AG04449 (cell line): ENCODE measurements at regions of chr11 and their contacts with region 1.

Region 1: DNA sequence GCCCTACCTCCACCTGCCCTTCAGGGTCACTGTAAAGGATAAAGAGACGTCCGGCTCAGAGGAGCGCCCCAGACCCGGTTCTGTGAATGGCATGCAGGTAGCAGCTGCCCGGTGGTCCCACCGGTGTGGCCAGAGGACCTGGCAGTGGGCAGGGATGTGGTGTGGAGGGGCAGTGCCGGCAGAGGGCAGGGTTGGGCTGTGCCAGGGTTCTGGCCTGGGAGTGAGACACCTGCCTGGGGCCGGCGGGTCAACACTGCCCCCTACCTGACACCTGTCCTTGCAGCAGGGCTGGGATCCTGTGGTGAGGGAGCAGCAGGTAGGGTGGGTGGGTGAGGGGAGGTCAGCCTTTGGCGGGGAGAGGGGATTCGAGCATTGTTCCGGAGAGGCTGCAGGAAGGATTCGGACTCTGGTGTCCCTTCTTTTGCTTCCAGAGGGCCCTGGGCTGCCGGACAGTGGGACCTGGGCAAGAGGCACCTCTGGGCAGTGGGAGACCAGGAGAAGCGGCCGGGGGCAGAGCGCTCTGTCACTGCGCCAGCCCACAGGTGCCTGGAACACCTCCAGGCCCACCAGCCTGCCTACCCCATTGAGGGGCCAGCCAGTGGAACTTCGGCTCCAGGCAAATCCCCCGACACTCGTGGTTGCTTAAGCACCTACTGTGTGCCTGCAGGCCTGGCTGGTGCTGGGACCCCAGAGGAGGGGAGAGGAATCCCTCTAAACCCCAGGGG is 1.6 kb upstream of the PHLDA2 start:
- DNase-seq: no peak
- H3K4me3 ChIP-seq: peak overlapping the region; percentile 77
- CTCF ChIP-seq: peak; percentile 75

Region 2: GRCh38 chr11:2892215-2893020 is 38.4 kb before region 1 on chr11:
- CTCF ChIA-PET with region 1: interaction called, 13 read pairs
- POLR2A ChIA-PET with region 1: interaction called, 14 read pairs
- DNase-seq: no peak
- H3K4me3 ChIP-seq: peak overlapping the region; percentile 62
- CTCF ChIP-seq: peak; percentile 96

Region 3: DNA sequence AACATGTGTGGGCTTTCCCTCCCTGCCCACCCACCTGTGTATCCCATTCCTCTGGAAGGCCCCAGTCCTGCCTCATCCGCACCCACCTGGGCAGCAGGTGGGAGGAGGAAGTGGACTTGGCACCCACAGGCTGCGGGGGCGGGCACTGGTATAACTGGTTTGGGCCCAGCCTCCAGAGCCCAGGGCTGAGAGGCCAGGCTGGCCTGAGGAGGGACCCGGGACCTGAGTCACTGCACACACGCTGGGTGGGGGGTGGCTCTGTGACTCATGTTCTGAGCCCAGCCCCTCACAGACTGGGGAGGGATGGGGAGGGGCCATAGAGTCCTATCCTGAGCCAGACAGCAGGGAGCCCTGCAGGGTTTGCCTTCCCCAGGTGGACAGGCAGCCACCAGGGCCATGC is 18.4 kb before region 1 on chr11:
- CTCF ChIA-PET with region 1: interaction called, 11 read pairs
- POLR2A ChIA-PET with region 1: interaction called, 13 read pairs
- DNase-seq: peak; percentile 34
- H3K4me3 ChIP-seq: no peak overlapping the region
- CTCF ChIP-seq: no peak

Region 4: DNA sequence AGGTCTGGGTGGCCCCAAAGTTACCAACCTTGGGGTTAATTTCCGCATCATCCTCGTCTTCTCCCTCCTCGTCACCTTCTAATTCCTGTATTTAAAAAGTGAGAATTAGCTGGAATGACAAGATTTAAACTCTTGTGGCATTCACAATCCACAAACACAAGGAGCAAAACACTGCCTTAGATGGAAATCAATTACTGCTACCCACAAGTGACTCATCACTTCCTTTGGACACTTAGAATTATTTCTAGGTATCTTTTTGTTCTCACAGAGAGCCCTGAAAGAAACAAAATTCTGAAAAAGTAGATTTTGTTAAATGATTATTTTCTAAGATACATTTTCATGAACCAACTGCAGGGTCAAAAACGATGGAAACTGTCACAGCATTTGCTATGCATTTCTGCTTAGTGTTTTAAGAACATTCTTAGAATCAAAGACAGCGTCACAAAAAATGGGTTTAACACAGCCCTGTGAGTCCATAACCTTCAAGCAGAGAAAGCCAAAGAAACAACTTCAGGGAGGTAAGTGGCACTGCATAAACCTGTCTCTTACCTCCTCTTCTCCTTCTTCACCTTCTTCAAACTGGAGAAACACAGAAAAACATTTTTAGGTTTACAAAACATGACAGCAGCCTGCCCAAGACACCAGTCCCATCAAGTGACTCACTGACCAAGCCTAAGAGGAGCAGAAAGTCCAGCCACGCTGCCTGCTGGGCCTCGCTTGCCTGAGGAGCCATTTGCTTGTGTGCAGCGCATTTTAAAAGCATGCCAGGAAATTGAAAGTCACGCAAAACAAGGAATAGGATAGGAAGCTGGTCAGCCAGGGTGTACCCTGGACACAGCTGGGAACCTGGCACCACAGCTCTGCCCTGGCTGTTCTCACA is 20.6 kb after region 1 on chr11:
- CTCF ChIA-PET with region 1: interaction called, 25 read pairs
- POLR2A ChIA-PET with region 1: interaction called, 16 read pairs
- DNase-seq: no peak
- H3K4me3 ChIP-seq: no peak overlapping the region
- CTCF ChIP-seq: no peak